ENCODE measurements at regions of chr11 and their contacts with region 1.

Region 1: GRCh38 chr11:129279326-129280026 is 87.4 kb upstream of the ARHGAP32 start:
- DNase-seq: peak; percentile 63
- H3K4me3 Mint-ChIP-seq: peak overlapping the region; percentile 77
- H3K27ac Mint-ChIP-seq: peak overlapping the region; percentile 85
- H3K4me1 Mint-ChIP-seq: peaks cover 35% of the 10 kb centered on the region
- H3K27me3 Mint-ChIP-seq: peaks cover 8% of the 10 kb centered on the region

Region 2: GRCh38 chr11:128039140-128040021 is 1240.1 kb before region 1 on chr11:
- CTCF ChIA-PET with region 1: no interaction called
- intact Hi-C with region 1: loop called (anchors 5 kb)
- DNase-seq: peak; percentile 89
- H3K4me3 Mint-ChIP-seq: peak overlapping the region; percentile 40
- H3K27ac Mint-ChIP-seq: peak overlapping the region; percentile 92
- H3K4me1 Mint-ChIP-seq: peaks cover 47% of the 10 kb centered on the region
- H3K27me3 Mint-ChIP-seq: no peaks in the 10 kb centered on the region

Region 3: GRCh38 chr11:128965485-128965884 is 314.0 kb before region 1 on chr11:
- CTCF ChIA-PET with region 1: no interaction called
- intact Hi-C with region 1: loop called (anchors 5 kb)
- DNase-seq: no peak
- H3K4me3 Mint-ChIP-seq: no peak overlapping the region
- H3K27ac Mint-ChIP-seq: no peak overlapping the region
- H3K4me1 Mint-ChIP-seq: peaks cover 25% of the 10 kb centered on the region
- H3K27me3 Mint-ChIP-seq: no peaks in the 10 kb centered on the region

Region 4: DNA sequence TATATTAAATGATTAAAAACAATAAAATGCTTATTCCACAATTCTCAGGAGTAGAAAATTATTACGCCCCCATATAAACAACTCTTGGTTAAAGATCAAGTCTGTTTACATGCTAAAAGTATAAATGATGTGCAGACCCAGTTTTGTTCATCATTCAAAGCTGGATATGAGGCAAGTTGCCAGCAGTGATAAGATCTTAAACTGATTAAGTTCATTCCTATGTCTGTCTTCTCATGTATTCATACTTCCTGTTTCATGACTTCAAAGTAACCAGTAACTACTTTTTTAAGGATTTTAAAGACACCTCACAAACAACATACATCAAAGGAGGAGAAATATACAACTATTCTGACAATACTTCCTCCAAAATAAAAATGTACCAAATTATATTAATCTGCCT is 32.3 kb before region 1 on chr11:
- CTCF ChIA-PET with region 1: no interaction called
- intact Hi-C with region 1: loop called (anchors 1 kb)
- DNase-seq: no peak
- H3K4me3 Mint-ChIP-seq: no peak overlapping the region
- H3K27ac Mint-ChIP-seq: no peak overlapping the region
- H3K4me1 Mint-ChIP-seq: peaks cover 28% of the 10 kb centered on the region
- H3K27me3 Mint-ChIP-seq: no peaks in the 10 kb centered on the region

Region 5: GRCh38 chr11:129331871-129332274 is 52.4 kb after region 1 on chr11:
- CTCF ChIA-PET with region 1: interaction called, 3 read pairs
- intact Hi-C with region 1: loop called (anchors 5 kb)
- DNase-seq: peak; percentile 85
- H3K4me3 Mint-ChIP-seq: no peak overlapping the region
- H3K27ac Mint-ChIP-seq: no peak overlapping the region
- H3K4me1 Mint-ChIP-seq: peaks cover 4% of the 10 kb centered on the region
- H3K27me3 Mint-ChIP-seq: no peaks in the 10 kb centered on the region

Region 6: DNA sequence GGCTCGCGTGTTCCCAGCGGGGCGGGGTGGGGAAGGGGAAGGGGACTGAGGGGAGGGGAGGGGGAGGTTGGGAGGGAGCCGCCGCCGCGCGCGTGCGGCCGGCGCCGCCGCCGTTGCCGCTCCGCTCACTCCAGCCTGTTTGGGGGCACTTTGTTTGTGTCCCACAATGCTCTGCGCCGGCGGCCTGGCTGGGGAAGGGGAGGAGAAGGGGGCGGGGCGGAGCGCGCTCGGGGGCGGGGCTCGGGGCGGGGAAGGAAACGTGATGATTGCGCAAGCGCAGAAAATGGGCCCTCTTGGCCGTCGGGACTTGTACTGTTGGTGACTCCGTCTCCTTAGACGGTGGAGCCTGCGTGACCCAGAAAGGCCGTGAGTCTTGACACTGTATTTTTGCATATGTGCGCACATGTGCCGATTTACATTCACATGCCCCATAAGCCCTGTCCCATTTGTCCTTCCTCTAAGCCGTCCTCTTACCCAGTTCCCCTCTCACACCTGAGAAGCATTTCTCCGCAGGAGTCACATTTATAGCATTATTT is 1035.3 kb after region 1 on chr11 and contains the start of gene ZBTB44:
- CTCF ChIA-PET with region 1: no interaction called
- intact Hi-C with region 1: loop called (anchors 10 kb)
- DNase-seq: peak; percentile 92
- H3K4me3 Mint-ChIP-seq: peak within 1 kb of the TSS; percentile 92
- H3K27ac Mint-ChIP-seq: peak within 1 kb of the TSS; percentile 94
- H3K4me1 Mint-ChIP-seq: peaks cover 21% of the 10 kb centered on the region
- H3K27me3 Mint-ChIP-seq: no peaks in the 10 kb centered on the region
- total RNA-seq, gene ZBTB44: 35.0 to 39.8 TPM

Region 7: DNA sequence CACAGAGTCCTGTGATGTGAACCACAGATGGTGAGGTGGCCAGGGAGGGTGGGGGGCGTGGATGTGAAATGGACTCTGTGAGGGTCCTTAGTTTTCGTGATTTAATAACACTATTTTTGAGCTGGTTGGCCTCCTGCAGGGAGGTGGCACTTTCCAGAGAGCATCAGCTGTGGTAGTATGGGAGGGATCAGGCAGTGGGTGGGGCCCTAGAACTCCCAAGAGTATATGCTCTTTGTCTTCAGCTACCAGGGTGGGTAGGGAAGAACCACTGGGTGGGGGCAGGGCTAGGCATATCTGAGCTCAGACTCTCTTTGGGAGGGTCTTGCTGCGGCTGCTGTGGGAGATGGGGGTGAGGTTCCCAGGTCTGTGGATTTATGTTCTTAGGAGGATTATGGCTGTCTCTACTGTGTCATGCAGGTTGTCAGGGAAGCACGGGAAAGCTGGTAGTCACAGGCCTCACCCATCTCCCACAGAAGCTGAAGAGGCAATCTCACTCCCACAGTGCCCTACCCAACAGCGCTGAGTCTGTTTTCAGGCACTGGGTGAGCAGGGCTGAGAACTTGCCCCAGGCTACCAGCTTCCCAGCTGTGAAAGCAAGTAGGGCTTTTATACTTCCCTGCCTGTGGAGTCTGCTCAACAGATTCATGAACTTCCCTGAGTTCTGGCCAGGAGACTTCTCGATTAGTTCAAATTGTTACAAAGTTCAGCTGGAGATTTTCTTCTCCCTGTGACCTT is 1684.7 kb after region 1 on chr11:
- CTCF ChIA-PET with region 1: no interaction called
- intact Hi-C with region 1: no loop called
- DNase-seq: no peak
- H3K4me3 Mint-ChIP-seq: no peak overlapping the region
- H3K27ac Mint-ChIP-seq: no peak overlapping the region
- H3K4me1 Mint-ChIP-seq: no peaks in the 10 kb centered on the region
- H3K27me3 Mint-ChIP-seq: peaks cover 9% of the 10 kb centered on the region